ENCODE measurements at regions of chr9 and their contacts with region 1.

Region 1: DNA sequence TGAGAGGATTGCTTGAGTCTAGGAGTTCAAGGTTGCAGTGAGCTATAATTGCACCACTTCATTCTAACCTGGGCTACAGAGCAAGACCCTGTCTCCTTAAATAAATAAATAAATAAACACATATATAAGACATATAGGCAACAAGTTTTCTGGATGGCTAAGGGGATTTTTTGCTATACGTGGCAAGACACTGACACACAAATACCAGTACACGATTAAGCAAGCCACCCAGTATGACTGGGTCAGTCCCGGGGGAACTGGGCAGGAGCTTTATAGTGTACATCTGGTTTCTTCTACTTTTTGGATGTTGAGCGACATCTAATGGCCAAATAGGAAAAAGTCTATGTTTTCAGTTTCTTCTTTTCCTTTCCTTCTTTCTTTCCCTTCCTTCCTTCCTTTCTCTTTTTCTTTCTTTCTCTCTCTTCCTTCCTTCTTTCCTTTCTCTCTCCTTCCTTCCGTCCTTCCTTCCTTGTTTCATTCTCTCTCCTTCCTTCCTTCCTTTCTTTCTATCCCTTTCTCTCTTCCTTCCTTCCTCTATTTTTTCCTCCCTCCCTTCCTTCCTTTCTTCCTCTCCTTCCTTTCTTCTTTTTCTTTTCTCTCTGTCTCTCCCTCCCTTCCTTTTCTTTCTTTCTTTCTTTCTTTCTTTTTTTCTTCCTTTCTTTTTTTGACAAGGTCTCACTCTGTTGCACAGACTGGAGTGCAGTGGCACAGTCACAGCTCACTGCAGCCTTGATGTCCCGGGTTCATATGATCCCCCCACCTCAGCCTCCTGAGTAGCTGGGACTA is 47.0 kb upstream of the PLIN2 start:
- DNase-seq: peak; percentile 34
- ATAC-seq: peak; percentile 91
- H3K4me3 ChIP-seq: no peak overlapping the region
- H3K27ac ChIP-seq: no peak overlapping the region
- H3K4me1 ChIP-seq: no peaks in the 10 kb centered on the region
- H3K27me3 ChIP-seq: no peaks in the 10 kb centered on the region
- CTCF ChIP-seq: peak; percentile 37 to 62 (median 61); a peak in 5 of 6 replicates
- POLR2A ChIP-seq: no peak
- RAD21 ChIP-seq: peak; percentile 81

Region 2: DNA sequence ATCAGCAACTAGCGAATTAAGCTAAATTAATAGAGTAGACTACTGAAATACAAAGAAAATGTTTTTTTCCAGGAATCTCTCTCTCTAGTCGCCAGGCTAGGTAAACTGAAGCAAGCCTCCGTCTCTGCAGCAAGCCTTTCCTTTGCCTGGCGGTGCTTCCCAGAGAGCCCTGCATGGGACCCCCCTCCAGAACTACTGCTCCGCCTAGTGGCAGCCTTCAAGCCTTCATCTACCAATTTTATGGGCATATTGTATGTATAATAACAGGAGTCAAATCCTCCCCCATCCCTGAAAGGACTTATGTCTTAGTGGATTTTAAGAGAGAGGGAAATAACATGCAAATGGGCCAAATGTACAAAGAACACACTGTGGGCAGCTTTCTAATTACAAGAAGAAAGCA is 383.2 kb before region 1 on chr9:
- CTCF ChIA-PET with region 1: no interaction called
- POLR2A ChIA-PET with region 1: no interaction called
- RAD21 ChIA-PET with region 1: no interaction called
- intact Hi-C with region 1: loop called (anchors 10 kb)
- DNase-seq: peak; percentile 24
- ATAC-seq: peak; percentile 94
- H3K4me3 ChIP-seq: no peak overlapping the region
- H3K27ac ChIP-seq: no peak overlapping the region
- H3K4me1 ChIP-seq: no peaks in the 10 kb centered on the region
- H3K27me3 ChIP-seq: peaks cover 32% of the 10 kb centered on the region
- CTCF ChIP-seq: peak; percentile 29 to 70 (median 68); a peak in 5 of 6 replicates
- POLR2A ChIP-seq: no peak
- RAD21 ChIP-seq: peak; percentile 49

Region 3: DNA sequence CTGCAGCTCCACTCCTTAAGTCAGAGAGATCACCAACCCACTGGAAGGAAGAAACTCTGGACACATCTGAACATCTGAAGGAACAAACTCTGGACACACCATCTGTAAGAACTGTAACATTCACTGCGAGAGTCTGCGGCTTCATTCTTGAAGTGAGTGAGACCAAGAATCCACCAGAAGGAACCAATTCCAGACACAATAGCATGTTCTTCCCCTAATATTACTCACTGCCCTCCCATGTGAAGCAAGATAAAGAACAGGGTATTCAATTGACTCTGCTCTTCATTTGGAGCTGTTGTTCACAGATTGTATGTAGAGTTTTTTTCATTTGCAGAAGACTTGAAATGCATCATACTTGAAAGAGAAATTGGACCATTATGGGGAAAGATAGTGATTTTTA is 152.1 kb before region 1 on chr9:
- CTCF ChIA-PET with region 1: no interaction called
- POLR2A ChIA-PET with region 1: no interaction called
- RAD21 ChIA-PET with region 1: no interaction called
- intact Hi-C with region 1: no loop called
- DNase-seq: no peak
- ATAC-seq: no peak
- H3K4me3 ChIP-seq: no peak overlapping the region
- H3K27ac ChIP-seq: no peak overlapping the region
- H3K4me1 ChIP-seq: no peaks in the 10 kb centered on the region
- H3K27me3 ChIP-seq: peaks cover 2% of the 10 kb centered on the region; the same call in 1 of the 2 replicates
- CTCF ChIP-seq: no peak
- POLR2A ChIP-seq: no peak
- RAD21 ChIP-seq: no peak

Region 4: GRCh38 chr9:19048966-19049916 is 125.1 kb before region 1 on chr9 and contains the start of gene RRAGA:
- CTCF ChIA-PET with region 1: interaction called, 29 read pairs
- POLR2A ChIA-PET with region 1: interaction called, 5 read pairs
- RAD21 ChIA-PET with region 1: interaction called, 5 to 8 read pairs
- intact Hi-C with region 1: loop called (anchors 1 kb)
- DNase-seq: peak; percentile 89
- ATAC-seq: peak; percentile 92
- H3K4me3 ChIP-seq: peak within 1 kb of the TSS; percentile 71 to 88
- H3K27ac ChIP-seq: peak within 1 kb of the TSS; percentile 60
- H3K4me1 ChIP-seq: peaks cover 6 to 21% of the 10 kb centered on the region in 2 experiments; a peak in 3 of 4 replicates
- H3K27me3 ChIP-seq: no peaks in the 10 kb centered on the region
- CTCF ChIP-seq: peak; percentile 80 to 94 (median 85)
- POLR2A ChIP-seq: peak; percentile 56
- RAD21 ChIP-seq: peak; percentile 76
- total RNA-seq, gene RRAGA: 47.3 TPM

Region 5: DNA sequence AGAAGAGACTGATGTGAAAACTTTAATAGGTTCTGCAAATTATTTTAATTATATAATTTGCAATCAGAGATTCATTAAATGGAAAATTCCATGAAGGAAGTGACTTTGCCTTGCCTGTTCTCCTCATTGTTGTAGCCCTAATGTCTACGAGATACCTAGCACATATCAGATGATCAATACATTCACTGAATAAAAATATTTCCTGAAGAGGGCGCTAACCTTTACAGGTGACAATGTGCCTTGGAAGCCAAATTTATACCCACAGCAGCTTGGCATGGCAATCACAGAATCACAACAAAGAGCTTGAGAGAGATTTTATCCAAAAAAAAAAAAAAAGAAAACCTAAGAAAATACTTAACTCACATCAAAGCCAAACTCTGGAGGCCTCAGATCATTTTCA is 89.0 kb before region 1 on chr9:
- CTCF ChIA-PET with region 1: interaction called, 10 read pairs
- POLR2A ChIA-PET with region 1: no interaction called
- RAD21 ChIA-PET with region 1: interaction called in 1 of 2 experiments, 4 read pairs
- intact Hi-C with region 1: loop called (anchors 2 kb)
- DNase-seq: peak; percentile 22
- ATAC-seq: peak; percentile 79
- H3K4me3 ChIP-seq: no peak overlapping the region
- H3K27ac ChIP-seq: no peak overlapping the region
- H3K4me1 ChIP-seq: no peaks in the 10 kb centered on the region
- H3K27me3 ChIP-seq: no peaks in the 10 kb centered on the region
- CTCF ChIP-seq: peak; percentile 34 to 66 (median 43); a peak in 4 of 6 replicates
- POLR2A ChIP-seq: no peak
- RAD21 ChIP-seq: peak; percentile 55

Region 6: DNA sequence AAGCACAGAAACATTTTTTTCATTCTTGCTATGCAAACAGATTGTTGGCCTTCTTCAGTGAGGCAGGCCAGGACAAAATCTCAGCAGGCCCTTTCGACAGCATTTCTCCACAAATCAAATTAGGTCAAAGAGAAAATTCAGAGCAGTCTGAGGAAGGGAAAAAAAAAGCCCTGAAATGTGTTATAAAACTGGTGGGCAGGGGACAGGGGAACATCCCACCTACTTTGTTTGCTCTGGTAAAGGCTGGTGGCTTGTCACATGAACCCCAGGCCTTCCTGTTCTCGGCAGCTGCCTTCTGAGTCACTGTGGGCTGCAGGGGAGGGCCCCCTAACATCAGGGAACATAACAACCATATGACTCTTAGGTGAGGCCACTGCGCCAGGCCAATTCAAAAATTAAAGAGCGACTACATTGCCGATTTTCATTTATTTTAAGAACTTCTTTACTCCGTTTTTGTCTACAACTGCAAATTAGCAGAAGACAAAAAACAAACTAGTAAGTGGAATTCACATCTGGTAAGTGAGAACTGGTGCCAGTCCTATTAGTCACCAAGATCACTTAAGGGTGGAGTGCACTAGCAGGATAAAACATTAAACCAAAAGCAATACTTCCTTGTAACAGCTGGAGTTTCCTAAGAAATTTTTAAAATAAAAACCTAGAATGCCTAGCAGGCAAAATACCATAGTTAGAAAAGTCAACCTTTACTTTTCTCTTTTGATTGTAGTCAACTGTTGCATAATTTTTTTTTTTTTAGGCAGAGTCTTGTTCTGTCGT is 10.0 kb after region 1 on chr9:
- CTCF ChIA-PET with region 1: interaction called, 10 read pairs
- POLR2A ChIA-PET with region 1: interaction called, 7 read pairs
- RAD21 ChIA-PET with region 1: no interaction called
- intact Hi-C with region 1: no loop called
- DNase-seq: peak; percentile 59
- ATAC-seq: peak; percentile 96
- H3K4me3 ChIP-seq: peak overlapping the region in 1 of 2 experiments; percentile 39; a peak in 2 of 4 replicates
- H3K27ac ChIP-seq: peak overlapping the region; percentile 42
- H3K4me1 ChIP-seq: peaks cover 16 to 26% of the 10 kb centered on the region in 2 experiments
- H3K27me3 ChIP-seq: no peaks in the 10 kb centered on the region
- CTCF ChIP-seq: no peak
- POLR2A ChIP-seq: no peak
- RAD21 ChIP-seq: no peak

Measured in HCT116 (cell line).